GM12878 (cell line): ENCODE measurements at regions of chr18 and their contacts with region 1.

Region 1: DNA sequence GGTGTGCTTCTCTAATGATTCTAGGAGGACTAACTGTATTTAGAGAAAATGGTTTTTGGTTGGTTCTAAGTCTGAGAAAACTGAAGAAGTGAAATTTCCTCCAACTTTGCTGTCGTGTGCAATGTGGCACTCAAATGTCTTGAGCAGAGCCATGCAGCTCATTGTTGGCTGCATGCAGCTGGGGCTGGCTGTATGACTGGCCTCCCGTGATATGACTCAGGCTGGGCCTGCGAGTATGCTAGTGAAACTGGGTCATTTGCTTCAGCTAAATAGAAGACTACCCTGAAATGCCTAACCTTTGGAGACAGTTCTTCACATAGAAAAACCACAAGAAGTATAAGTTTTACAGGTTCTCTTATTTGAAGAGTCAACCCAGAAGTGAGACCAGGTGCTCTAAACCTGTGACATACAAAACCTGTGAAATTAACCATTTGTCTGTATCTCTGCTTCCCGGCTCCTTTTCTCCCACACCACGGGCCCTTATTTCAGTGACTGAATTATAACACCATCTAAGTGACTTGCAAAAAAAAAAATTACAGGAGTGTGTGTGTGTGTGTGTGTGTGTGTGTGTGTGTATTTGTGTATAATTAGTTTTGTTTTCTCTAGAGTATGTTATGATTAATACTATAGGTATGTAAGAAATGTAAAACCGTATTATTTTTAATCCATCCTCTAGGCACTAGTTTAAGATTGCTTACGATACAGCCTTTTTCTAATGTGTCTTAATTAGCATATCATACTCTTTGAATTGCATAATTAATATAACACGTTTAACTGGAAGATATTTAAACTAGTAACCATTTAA is 15.9 kb downstream of the POLI start:
- DNase-seq: peak; percentile 97
- ATAC-seq: peak; percentile 99
- H3K4me3 ChIP-seq: no peak overlapping the region
- H3K27ac ChIP-seq: peak overlapping the region; percentile 73
- H3K4me1 ChIP-seq: peaks cover 28% of the 10 kb centered on the region
- H3K27me3 ChIP-seq: no peaks in the 10 kb centered on the region
- CTCF ChIP-seq: no peak
- EP300 ChIP-seq: peak; percentile 94 to 97
- POLR2A ChIP-seq: peak; percentile 72
- RAD21 ChIP-seq: 0 out of 2 replicates have a peak, but pooled peaks have one; percentile 6

Region 2: GRCh38 chr18:53402670-53403069 is 882.5 kb before region 1 on chr18:
- CTCF ChIA-PET with region 1: no interaction called
- POLR2A ChIA-PET with region 1: no interaction called
- RAD21 ChIA-PET with region 1: no interaction called
- SMC1A ChIA-PET with region 1: no interaction called
- in situ Hi-C with region 1: no loop called
- intact Hi-C with region 1: no loop called
- DNase-seq: no peak
- ATAC-seq: no peak
- H3K4me3 ChIP-seq: no peak overlapping the region
- H3K27ac ChIP-seq: no peak overlapping the region
- H3K4me1 ChIP-seq: no peaks in the 10 kb centered on the region
- H3K27me3 ChIP-seq: no peaks in the 10 kb centered on the region
- CTCF ChIP-seq: no peak
- EP300 ChIP-seq: no peak
- POLR2A ChIP-seq: no peak
- RAD21 ChIP-seq: no peak

Region 3: GRCh38 chr18:54149078-54149697 is 136.0 kb before region 1 on chr18:
- CTCF ChIA-PET with region 1: no interaction called
- POLR2A ChIA-PET with region 1: no interaction called
- RAD21 ChIA-PET with region 1: no interaction called
- SMC1A ChIA-PET with region 1: no interaction called
- in situ Hi-C with region 1: no loop called
- intact Hi-C with region 1: loop called (anchors 2 kb)
- DNase-seq: peak; percentile 69
- ATAC-seq: peak; percentile 76
- H3K4me3 ChIP-seq: peak overlapping the region; percentile 33
- H3K27ac ChIP-seq: peak overlapping the region; percentile 86
- H3K4me1 ChIP-seq: peaks cover 32% of the 10 kb centered on the region
- H3K27me3 ChIP-seq: no peaks in the 10 kb centered on the region
- CTCF ChIP-seq: no peak
- EP300 ChIP-seq: peak; percentile 79 to 84
- POLR2A ChIP-seq: no peak
- RAD21 ChIP-seq: peak; percentile 25; the same call in 1 of the 2 replicates

Region 4: GRCh38 chr18:54209471-54210180 is 75.6 kb before region 1 on chr18:
- CTCF ChIA-PET with region 1: interaction called, 8 read pairs
- POLR2A ChIA-PET with region 1: interaction called, 5 read pairs
- RAD21 ChIA-PET with region 1: no interaction called
- SMC1A ChIA-PET with region 1: interaction called, 5 read pairs
- in situ Hi-C with region 1: no loop called
- intact Hi-C with region 1: loop called (anchors 1 kb)
- DNase-seq: peak; percentile 61
- ATAC-seq: peak; percentile 83
- H3K4me3 ChIP-seq: peak overlapping the region; percentile 64
- H3K27ac ChIP-seq: peak overlapping the region; percentile 98
- H3K4me1 ChIP-seq: peaks cover 32% of the 10 kb centered on the region
- H3K27me3 ChIP-seq: no peaks in the 10 kb centered on the region
- CTCF ChIP-seq: no peak
- EP300 ChIP-seq: peak; percentile 94 to 97
- POLR2A ChIP-seq: no peak
- RAD21 ChIP-seq: no peak

Region 5: GRCh38 chr18:54217624-54218023 is 67.6 kb before region 1 on chr18:
- CTCF ChIA-PET with region 1: interaction called, 10 read pairs
- POLR2A ChIA-PET with region 1: interaction called, 5 read pairs
- RAD21 ChIA-PET with region 1: interaction called, 16 read pairs
- SMC1A ChIA-PET with region 1: interaction called, 20 read pairs
- in situ Hi-C with region 1: no loop called
- intact Hi-C with region 1: loop called (anchors 1 kb)
- DNase-seq: no peak
- ATAC-seq: peak; percentile 35
- H3K4me3 ChIP-seq: peak overlapping the region; percentile 77
- H3K27ac ChIP-seq: peak overlapping the region; percentile 88
- H3K4me1 ChIP-seq: peaks cover 20% of the 10 kb centered on the region
- H3K27me3 ChIP-seq: no peaks in the 10 kb centered on the region
- CTCF ChIP-seq: no peak
- EP300 ChIP-seq: no peak
- POLR2A ChIP-seq: no peak
- RAD21 ChIP-seq: no peak

Region 6: GRCh38 chr18:54247511-54248175 is 37.5 kb before region 1 on chr18:
- CTCF ChIA-PET with region 1: no interaction called
- POLR2A ChIA-PET with region 1: interaction called, 3 read pairs
- RAD21 ChIA-PET with region 1: interaction called, 6 read pairs
- SMC1A ChIA-PET with region 1: interaction called, 7 read pairs
- in situ Hi-C with region 1: no loop called
- intact Hi-C with region 1: loop called (anchors 1 kb)
- DNase-seq: no peak
- ATAC-seq: no peak
- H3K4me3 ChIP-seq: no peak overlapping the region
- H3K27ac ChIP-seq: peak overlapping the region; percentile 23
- H3K4me1 ChIP-seq: peaks cover 34% of the 10 kb centered on the region
- H3K27me3 ChIP-seq: no peaks in the 10 kb centered on the region
- CTCF ChIP-seq: no peak
- EP300 ChIP-seq: no peak
- POLR2A ChIP-seq: no peak
- RAD21 ChIP-seq: no peak

Region 7: GRCh38 chr18:54261894-54262293 is 23.3 kb before region 1 on chr18:
- CTCF ChIA-PET with region 1: interaction called, 3 read pairs
- POLR2A ChIA-PET with region 1: interaction called, 6 read pairs
- RAD21 ChIA-PET with region 1: interaction called, 5 read pairs
- SMC1A ChIA-PET with region 1: interaction called, 13 read pairs
- in situ Hi-C with region 1: no loop called
- intact Hi-C with region 1: loop called (anchors 1 kb)
- DNase-seq: peak; percentile 85
- ATAC-seq: peak; percentile 80
- H3K4me3 ChIP-seq: peak overlapping the region; percentile 44; the same call in 1 of the 2 replicates
- H3K27ac ChIP-seq: peak overlapping the region; percentile 94
- H3K4me1 ChIP-seq: peaks cover 49% of the 10 kb centered on the region
- H3K27me3 ChIP-seq: no peaks in the 10 kb centered on the region
- CTCF ChIP-seq: no peak
- EP300 ChIP-seq: peak; percentile 22 to 67; a peak in 2 of 4 replicates
- POLR2A ChIP-seq: no peak
- RAD21 ChIP-seq: 0 out of 2 replicates have a peak, but pooled peaks have one; percentile 11

Region 8: DNA sequence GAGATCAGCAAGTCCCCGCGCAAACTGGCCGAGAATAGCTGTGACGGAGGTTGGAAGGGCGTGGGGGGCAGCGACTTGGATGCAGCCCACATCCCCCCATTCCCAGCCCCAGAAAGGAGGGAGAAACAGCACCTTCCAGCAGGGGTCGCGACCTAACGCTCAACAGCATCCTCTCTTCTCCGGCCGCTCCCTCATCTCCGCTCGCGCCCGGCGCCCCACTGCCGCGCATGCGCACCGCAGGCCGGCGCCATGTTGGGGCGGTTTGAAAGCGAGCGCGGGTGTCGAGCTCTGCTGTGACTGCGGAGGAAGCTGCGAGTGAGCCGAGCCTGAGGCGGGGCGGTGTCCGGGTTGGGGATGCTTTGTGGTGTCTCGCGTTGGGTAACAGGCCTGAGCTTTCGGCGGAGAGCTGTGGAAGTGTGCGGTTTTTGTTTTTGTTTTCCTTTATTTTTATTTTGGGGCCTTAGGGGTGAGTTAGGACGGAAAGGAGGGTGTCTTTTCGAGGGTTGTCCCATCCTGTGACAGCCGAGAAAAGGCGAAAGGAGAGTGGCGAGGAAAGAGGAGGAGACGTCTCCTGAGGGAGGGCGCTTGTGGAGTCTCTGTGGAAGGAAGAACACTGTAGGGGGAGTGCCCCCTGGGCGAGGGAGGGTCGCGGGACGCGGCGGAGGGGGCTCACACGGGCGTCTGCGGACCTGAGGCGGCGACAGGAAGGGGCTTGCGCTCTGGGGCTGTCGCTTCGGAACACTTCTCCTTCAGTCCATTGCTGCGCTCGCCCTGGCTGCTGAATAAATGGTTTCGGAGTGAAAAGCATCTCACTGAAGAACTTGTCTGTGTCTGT is 72.7 kb after region 1 on chr18 and contains the starts of genes C18orf54 and STARD6:
- CTCF ChIA-PET with region 1: no interaction called
- POLR2A ChIA-PET with region 1: no interaction called
- RAD21 ChIA-PET with region 1: no interaction called
- SMC1A ChIA-PET with region 1: no interaction called
- in situ Hi-C with region 1: no loop called
- intact Hi-C with region 1: loop called (anchors 1 kb)
- DNase-seq: peak; percentile 76
- ATAC-seq: peak; percentile 96
- H3K4me3 ChIP-seq: peak within 1 kb of the TSS; percentile 89
- H3K27ac ChIP-seq: peak within 1 kb of the TSS; percentile 84
- H3K4me1 ChIP-seq: peaks cover 3% of the 10 kb centered on the region
- H3K27me3 ChIP-seq: no peaks in the 10 kb centered on the region
- CTCF ChIP-seq: peak; percentile 63 to 70 (median 65)
- EP300 ChIP-seq: no peak
- POLR2A ChIP-seq: peak; percentile 96
- RAD21 ChIP-seq: 0 out of 2 replicates have a peak, but pooled peaks have one; percentile 20
- polyA plus RNA-seq, gene C18orf54: 1.2 to 1.5 TPM
- polyA plus RNA-seq, gene STARD6: 0.35 to 0.45 TPM

Region 9: GRCh38 chr18:54420096-54420495 is 134.9 kb after region 1 on chr18:
- CTCF ChIA-PET with region 1: no interaction called
- POLR2A ChIA-PET with region 1: no interaction called
- RAD21 ChIA-PET with region 1: no interaction called
- SMC1A ChIA-PET with region 1: no interaction called
- in situ Hi-C with region 1: no loop called
- intact Hi-C with region 1: no loop called
- DNase-seq: no peak
- ATAC-seq: no peak
- H3K4me3 ChIP-seq: no peak overlapping the region
- H3K27ac ChIP-seq: no peak overlapping the region
- H3K4me1 ChIP-seq: no peaks in the 10 kb centered on the region
- H3K27me3 ChIP-seq: no peaks in the 10 kb centered on the region
- CTCF ChIP-seq: no peak
- EP300 ChIP-seq: no peak
- POLR2A ChIP-seq: no peak
- RAD21 ChIP-seq: no peak